GM12878 (cell line): ENCODE measurements at regions of chr1 and their contacts with region 1.

Region 1: GRCh38 chr1:154479764-154480421 is 22.1 kb upstream of the TDRD10 start:
- DNase-seq: peak; percentile 45
- ATAC-seq: peak; percentile 97
- H3K4me3 ChIP-seq: no peak overlapping the region
- H3K27ac ChIP-seq: no peak overlapping the region
- H3K4me1 ChIP-seq: peaks cover 3% of the 10 kb centered on the region; the same call in 1 of the 2 replicates
- H3K27me3 ChIP-seq: peaks cover 0 to 3% of the 10 kb centered on the region in 2 experiments; a peak in 1 of 4 replicates
- CTCF ChIP-seq: peak; percentile 92 to 95 (median 92); a peak in 5 of 6 replicates
- EP300 ChIP-seq: no peak
- POLR2A ChIP-seq: no peak
- RAD21 ChIP-seq: peak; percentile 100

Region 2: GRCh38 chr1:154335025-154335714 is 144.7 kb before region 1 on chr1:
- CTCF ChIA-PET with region 1: interaction called, 32 read pairs
- POLR2A ChIA-PET with region 1: no interaction called
- RAD21 ChIA-PET with region 1: interaction called, 9 read pairs
- SMC1A ChIA-PET with region 1: interaction called, 7 read pairs
- in situ Hi-C with region 1: no loop called
- intact Hi-C with region 1: no loop called
- DNase-seq: no peak
- ATAC-seq: peak; percentile 99
- H3K4me3 ChIP-seq: no peak overlapping the region
- H3K27ac ChIP-seq: no peak overlapping the region
- H3K4me1 ChIP-seq: no peaks in the 10 kb centered on the region
- H3K27me3 ChIP-seq: no peaks in the 10 kb centered on the region
- CTCF ChIP-seq: peak; percentile 75 to 88 (median 84)
- EP300 ChIP-seq: no peak
- POLR2A ChIP-seq: no peak
- RAD21 ChIP-seq: peak; percentile 77

Region 3: DNA sequence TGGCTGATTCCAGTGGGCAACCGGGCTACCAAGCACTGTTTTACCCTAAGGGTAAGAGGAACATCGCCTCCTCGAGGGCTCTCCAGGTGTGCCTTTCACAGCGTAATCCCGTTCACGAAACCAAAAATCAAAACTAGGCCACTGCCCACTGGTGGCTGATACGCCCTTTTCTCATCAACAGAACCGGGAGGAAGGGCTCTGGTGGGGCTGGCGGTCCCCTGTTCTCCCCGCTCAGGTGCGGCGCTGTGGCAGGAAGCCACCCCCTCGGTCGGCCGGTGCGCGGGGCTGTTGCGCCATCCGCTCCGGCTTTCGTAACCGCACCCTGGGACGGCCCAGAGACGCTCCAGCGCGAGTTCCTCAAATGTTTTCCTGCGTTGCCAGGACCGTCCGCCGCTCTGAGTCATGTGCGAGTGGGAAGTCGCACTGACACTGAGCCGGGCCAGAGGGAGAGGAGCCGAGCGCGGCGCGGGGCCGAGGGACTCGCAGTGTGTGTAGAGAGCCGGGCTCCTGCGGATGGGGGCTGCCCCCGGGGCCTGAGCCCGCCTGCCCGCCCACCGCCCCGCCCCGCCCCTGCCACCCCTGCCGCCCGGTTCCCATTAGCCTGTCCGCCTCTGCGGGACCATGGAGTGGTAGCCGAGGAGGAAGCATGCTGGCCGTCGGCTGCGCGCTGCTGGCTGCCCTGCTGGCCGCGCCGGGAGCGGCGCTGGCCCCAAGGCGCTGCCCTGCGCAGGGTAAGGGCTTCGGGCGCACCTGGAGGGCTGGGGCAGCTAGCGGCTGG is 74.7 kb before region 1 on chr1 and contains the start of gene IL6R:
- CTCF ChIA-PET with region 1: interaction called, 30 read pairs
- POLR2A ChIA-PET with region 1: interaction called, 4 read pairs
- RAD21 ChIA-PET with region 1: interaction called, 20 read pairs
- SMC1A ChIA-PET with region 1: interaction called, 10 read pairs
- in situ Hi-C with region 1: no loop called
- intact Hi-C with region 1: loop called (anchors 2 kb)
- DNase-seq: no peak
- ATAC-seq: peak; percentile 52
- H3K4me3 ChIP-seq: peak within 1 kb of the TSS; percentile 75
- H3K27ac ChIP-seq: peak within 1 kb of the TSS; percentile 83
- H3K4me1 ChIP-seq: peaks cover 68% of the 10 kb centered on the region
- H3K27me3 ChIP-seq: no peaks in the 10 kb centered on the region
- CTCF ChIP-seq: peak; percentile 46 to 63 (median 54); a peak in 5 of 6 replicates
- EP300 ChIP-seq: no peak
- POLR2A ChIP-seq: no peak; the same call in 1 of the 2 replicates
- RAD21 ChIP-seq: peak; percentile 55; the same call in 1 of the 2 replicates
- polyA plus RNA-seq, gene IL6R: 1.9 to 3.9 TPM

Region 4: GRCh38 chr1:154520333-154520732 is 40.4 kb after region 1 on chr1:
- CTCF ChIA-PET with region 1: interaction called, 21 read pairs
- POLR2A ChIA-PET with region 1: interaction called, 4 read pairs
- RAD21 ChIA-PET with region 1: interaction called, 4 read pairs
- SMC1A ChIA-PET with region 1: interaction called, 6 read pairs
- in situ Hi-C with region 1: no loop called
- intact Hi-C with region 1: no loop called
- DNase-seq: no peak
- ATAC-seq: peak; percentile 47; the same call in 1 of the 3 replicates
- H3K4me3 ChIP-seq: no peak overlapping the region
- H3K27ac ChIP-seq: no peak overlapping the region
- H3K4me1 ChIP-seq: no peaks in the 10 kb centered on the region
- H3K27me3 ChIP-seq: peaks cover 0 to 1% of the 10 kb centered on the region in 2 experiments; a peak in 2 of 4 replicates
- CTCF ChIP-seq: no peak
- EP300 ChIP-seq: no peak
- POLR2A ChIP-seq: no peak
- RAD21 ChIP-seq: no peak

Region 5: GRCh38 chr1:154546264-154547063 is 66.6 kb after region 1 on chr1:
- CTCF ChIA-PET with region 1: interaction called, 302 read pairs
- POLR2A ChIA-PET with region 1: interaction called, 11 read pairs
- RAD21 ChIA-PET with region 1: interaction called, 189 read pairs
- SMC1A ChIA-PET with region 1: interaction called, 151 read pairs
- in situ Hi-C with region 1: loop called (anchors 5 kb)
- intact Hi-C with region 1: loop called (anchors 1 kb)
- DNase-seq: peak; percentile 13
- ATAC-seq: peak; percentile 87
- H3K4me3 ChIP-seq: no peak overlapping the region
- H3K27ac ChIP-seq: no peak overlapping the region
- H3K4me1 ChIP-seq: peaks cover 15% of the 10 kb centered on the region
- H3K27me3 ChIP-seq: no peaks in the 10 kb centered on the region; a peak in 1 of 4 replicates
- CTCF ChIP-seq: peak; percentile 72 to 86 (median 84)
- EP300 ChIP-seq: no peak
- POLR2A ChIP-seq: no peak
- RAD21 ChIP-seq: peak; percentile 98

Region 6: GRCh38 chr1:154870115-154870571 is 390.2 kb after region 1 on chr1 and contains the start of gene KCNN3:
- CTCF ChIA-PET with region 1: interaction called, 16 read pairs
- POLR2A ChIA-PET with region 1: no interaction called
- RAD21 ChIA-PET with region 1: interaction called, 5 read pairs
- SMC1A ChIA-PET with region 1: no interaction called
- in situ Hi-C with region 1: no loop called
- intact Hi-C with region 1: loop called (anchors 5 kb)
- DNase-seq: peak; percentile 82
- ATAC-seq: peak; percentile 89
- H3K4me3 ChIP-seq: peak within 1 kb of the TSS; percentile 88
- H3K27ac ChIP-seq: peak within 1 kb of the TSS; percentile 46
- H3K4me1 ChIP-seq: peaks cover 58% of the 10 kb centered on the region
- H3K27me3 ChIP-seq: no peaks in the 10 kb centered on the region
- CTCF ChIP-seq: no peak
- EP300 ChIP-seq: no peak
- POLR2A ChIP-seq: peak; percentile 89
- RAD21 ChIP-seq: no peak
- polyA plus RNA-seq, gene KCNN3: 3.5 to 6.4 TPM